Activated T-helper 1 cell treated with anti-CD3 and anti-CD28 coated beads, Interleukin-12 subunit alpha, Interleukin-12 subunit beta, Interleukin-2, Interleukin-4 antibody, amounts not matched to agents 30 ng/mL and 10 ng/mL and 1 ng/mL, durations not matched to agents 14 hours and 24 hours and 36 hours (primary cell): ENCODE measurements at regions of chr14 and their contacts with region 1.

Region 1: DNA sequence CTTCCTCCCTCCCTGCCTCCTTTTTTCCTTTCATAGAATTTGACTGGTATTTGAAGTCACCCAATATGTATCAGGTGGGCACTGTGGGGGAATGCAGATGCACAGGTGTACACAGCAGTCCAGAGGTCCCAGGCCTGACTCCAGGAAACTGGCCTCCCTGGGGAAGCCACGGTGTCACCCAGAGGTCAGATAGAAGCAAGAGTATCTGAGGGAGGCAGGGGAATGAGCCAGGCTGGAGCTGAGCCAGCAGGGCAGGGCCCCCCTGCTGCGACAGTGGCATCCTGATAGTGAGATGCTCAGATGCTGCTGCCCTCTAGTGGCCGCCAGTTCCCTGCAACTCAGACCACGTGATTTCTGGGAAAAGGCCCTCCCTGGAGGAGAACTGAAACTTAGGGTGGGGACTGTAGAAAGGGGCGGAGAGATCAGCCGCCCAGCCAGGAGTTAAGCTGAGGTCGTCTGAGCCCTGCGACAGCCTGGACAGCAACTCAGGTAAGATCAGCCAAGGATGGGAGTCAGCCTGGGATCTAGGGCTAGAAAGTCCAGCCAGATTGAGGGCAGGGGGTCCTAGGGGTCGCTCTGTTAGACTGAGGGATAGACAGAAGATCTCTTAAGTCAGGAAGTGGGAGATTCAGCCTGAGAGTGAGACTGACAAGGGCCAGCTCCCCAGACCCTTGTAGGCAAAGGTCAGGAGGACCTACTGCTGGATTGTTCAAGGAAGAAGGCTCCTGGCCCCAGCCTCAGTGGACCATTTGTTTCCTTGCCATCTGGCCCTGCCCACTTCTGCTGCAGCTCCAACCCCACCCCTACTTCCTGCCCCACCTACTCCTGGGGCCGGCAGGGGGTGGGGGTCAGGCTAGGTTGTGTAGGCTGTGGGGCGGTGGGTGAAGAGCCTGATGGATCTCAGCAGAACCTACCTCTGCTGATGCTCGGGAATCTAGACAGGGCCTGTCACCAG is at the start of gene IRF9:
- DNase-seq: peak; percentile 98
- H3K4me3 Mint-ChIP-seq: peak within 1 kb of the TSS; percentile 99
- H3K27ac Mint-ChIP-seq: peak within 1 kb of the TSS; percentile 99
- H3K4me1 Mint-ChIP-seq: peaks cover 60% of the 10 kb centered on the region
- H3K27me3 Mint-ChIP-seq: peaks cover 4% of the 10 kb centered on the region
- total RNA-seq, gene IRF9: 130 and 152 TPM in 2 replicates

Region 2: DNA sequence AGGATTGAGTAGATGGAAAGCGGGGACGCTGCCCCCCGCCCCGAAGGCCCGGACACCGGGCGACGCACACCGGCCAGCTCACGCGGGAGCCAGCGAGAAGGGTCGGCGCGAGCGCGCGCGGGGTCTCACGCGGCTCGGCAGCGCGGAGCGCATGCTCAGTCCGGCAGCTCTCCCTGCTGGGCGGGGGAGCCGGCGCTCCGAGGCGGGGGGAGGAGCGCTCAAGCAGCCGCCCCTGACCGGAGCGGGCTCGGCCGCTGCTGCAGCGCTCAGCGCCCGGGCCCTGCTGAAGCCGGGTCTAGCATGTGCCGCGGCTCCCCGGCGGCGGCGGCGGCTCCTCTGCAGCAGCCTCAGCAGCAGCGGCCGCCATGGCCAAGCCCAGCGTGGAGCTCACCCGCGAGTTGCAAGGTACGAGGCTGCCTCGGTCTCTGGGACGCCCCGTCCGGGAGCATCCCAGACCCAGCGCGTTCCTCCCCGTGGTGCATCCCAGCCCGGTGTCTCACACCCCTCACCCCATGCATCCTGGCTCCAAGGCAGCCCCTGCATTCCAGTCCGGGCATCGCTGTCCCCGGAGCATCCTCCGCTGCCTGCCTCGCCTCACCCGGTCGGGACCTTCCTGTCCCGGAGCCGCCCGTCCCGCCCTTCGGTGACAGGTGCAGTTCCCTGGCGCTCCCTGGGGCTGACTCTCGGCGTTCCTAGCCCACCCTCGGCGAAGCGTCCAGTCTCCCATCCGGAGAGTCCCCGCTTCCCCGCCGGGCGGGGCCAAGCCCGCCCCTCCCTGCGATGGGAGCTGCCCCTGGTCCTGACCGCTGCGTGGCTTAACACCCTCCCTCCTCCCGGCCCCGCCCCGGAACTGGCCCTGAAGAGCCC is 109.1 kb before region 1 on chr14 and contains the start of gene CARMIL3:
- intact Hi-C with region 1: loop called (anchors 2 kb)
- DNase-seq: peak; percentile 67
- H3K4me3 Mint-ChIP-seq: peak within 1 kb of the TSS; percentile 85
- H3K27ac Mint-ChIP-seq: peak within 1 kb of the TSS; percentile 76
- H3K4me1 Mint-ChIP-seq: peaks cover 22% of the 10 kb centered on the region
- H3K27me3 Mint-ChIP-seq: peaks cover 17% of the 10 kb centered on the region
- total RNA-seq, gene CARMIL3: 3.0 and 3.4 TPM in 2 replicates

Region 3: GRCh38 chr14:24141097-24141880 is 19.8 kb before region 1 on chr14 and contains the start of gene EMC9:
- intact Hi-C with region 1: loop called (anchors 1 kb)
- DNase-seq: peak; percentile 100
- H3K4me3 Mint-ChIP-seq: peak within 1 kb of the TSS; percentile 98
- H3K27ac Mint-ChIP-seq: peak within 1 kb of the TSS; percentile 92
- H3K4me1 Mint-ChIP-seq: peaks cover 80% of the 10 kb centered on the region
- H3K27me3 Mint-ChIP-seq: no peaks in the 10 kb centered on the region
- total RNA-seq, gene EMC9: 22.9 and 28.3 TPM in 2 replicates

Region 4: GRCh38 chr14:24188251-24189058 is 27.3 kb after region 1 on chr14 and contains the start of gene IPO4:
- intact Hi-C with region 1: loop called (anchors 1 kb)
- DNase-seq: peak; percentile 93
- H3K4me3 Mint-ChIP-seq: peak within 1 kb of the TSS; percentile 91
- H3K27ac Mint-ChIP-seq: peak within 1 kb of the TSS; percentile 86
- H3K4me1 Mint-ChIP-seq: peaks cover 42% of the 10 kb centered on the region
- H3K27me3 Mint-ChIP-seq: no peaks in the 10 kb centered on the region
- total RNA-seq, gene IPO4: 106 and 107 TPM in 2 replicates

Region 5: GRCh38 chr14:24241829-24242443 is 80.8 kb after region 1 on chr14:
- intact Hi-C with region 1: loop called (anchors 1 kb)
- DNase-seq: peak; percentile 93
- H3K4me3 Mint-ChIP-seq: peak overlapping the region; percentile 96
- H3K27ac Mint-ChIP-seq: peak overlapping the region; percentile 99
- H3K4me1 Mint-ChIP-seq: peaks cover 58% of the 10 kb centered on the region
- H3K27me3 Mint-ChIP-seq: no peaks in the 10 kb centered on the region